ENCODE measurements at regions of chr20 and their contacts with region 1.

Region 1: DNA sequence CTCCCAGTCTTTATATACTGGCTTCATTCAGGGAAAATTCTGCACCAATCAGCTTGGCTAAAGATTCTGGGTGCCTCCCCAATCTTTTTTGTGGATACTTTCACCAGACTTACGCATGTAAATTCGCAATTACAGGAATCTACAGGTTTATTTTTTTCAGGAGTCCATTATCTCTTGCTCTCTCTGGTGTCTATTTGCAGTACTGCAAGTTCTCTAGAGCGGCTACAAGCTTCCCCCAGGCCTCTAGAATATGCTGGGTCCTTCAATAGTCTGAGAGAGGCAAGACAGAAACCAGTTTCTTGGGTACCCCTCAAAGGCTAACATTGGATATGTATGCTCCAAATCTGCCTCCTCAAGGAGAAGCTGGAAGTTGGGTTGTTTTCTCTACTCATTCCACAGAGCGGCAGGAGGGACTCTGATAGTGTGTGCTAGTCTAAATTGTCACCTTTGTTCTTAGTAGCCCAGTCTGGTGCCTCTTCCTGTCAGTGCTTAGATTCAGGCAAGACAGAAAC is 58.5 kb downstream of the SUN5 start:
- DNase-seq: no peak
- H3K4me3 Mint-ChIP-seq: no peak overlapping the region
- H3K27ac Mint-ChIP-seq: peak overlapping the region; percentile 20
- H3K4me1 Mint-ChIP-seq: peaks cover 27% of the 10 kb centered on the region
- H3K27me3 Mint-ChIP-seq: peaks cover 4% of the 10 kb centered on the region

Region 2: DNA sequence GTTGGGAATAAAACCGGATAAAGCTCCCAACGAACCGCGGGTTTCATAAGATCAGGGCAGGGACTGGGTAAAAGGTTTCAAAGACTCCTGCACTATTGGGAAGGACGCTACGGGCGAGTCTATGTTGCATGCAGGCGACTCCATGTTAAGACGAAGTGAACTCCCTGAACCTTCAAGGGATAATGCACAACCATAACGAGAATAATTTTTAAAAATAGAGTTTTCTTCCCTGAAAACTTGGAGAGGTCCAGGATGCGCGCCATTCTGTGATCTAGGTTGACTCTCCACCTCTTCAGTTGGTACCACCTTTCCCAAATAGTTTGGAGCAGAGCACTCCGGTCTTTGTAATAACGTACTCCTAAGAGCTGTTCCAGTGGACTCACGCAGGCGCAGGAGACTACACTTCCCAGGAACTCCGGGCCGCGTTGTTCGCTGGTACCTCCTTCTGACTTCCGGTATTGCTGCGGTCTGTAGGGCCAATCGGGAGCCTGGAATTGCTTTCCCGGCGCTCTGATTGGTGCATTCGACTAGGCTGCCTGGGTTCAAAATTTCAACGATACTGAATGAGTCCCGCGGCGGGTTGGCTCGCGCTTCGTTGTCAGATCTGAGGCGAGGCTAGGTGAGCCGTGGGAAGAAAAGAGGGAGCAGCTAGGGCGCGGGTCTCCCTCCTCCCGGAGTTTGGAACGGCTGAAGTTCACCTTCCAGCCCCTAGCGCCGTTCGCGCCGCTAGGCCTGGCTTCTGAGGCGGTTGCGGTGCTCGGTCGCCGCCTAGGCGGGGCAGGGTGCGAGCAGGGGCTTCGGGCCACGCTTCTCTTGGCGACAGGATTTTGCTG is 1206.8 kb before region 1 on chr20 and contains the start of gene TPX2:
- intact Hi-C with region 1: no loop called
- DNase-seq: peak; percentile 83
- H3K4me3 Mint-ChIP-seq: no peak within 1 kb of the TSS
- H3K27ac Mint-ChIP-seq: no peak within 1 kb of the TSS
- H3K4me1 Mint-ChIP-seq: peaks cover 5% of the 10 kb centered on the region
- H3K27me3 Mint-ChIP-seq: no peaks in the 10 kb centered on the region
- total RNA-seq, gene TPX2: 53.3 and 54.4 TPM in 2 replicates

Region 3: GRCh38 chr20:32966881-32967781 is 21.4 kb after region 1 on chr20:
- intact Hi-C with region 1: loop called (anchors 2 kb)
- DNase-seq: peak; percentile 63
- H3K4me3 Mint-ChIP-seq: peak overlapping the region; percentile 37
- H3K27ac Mint-ChIP-seq: peak overlapping the region; percentile 73
- H3K4me1 Mint-ChIP-seq: peaks cover 57% of the 10 kb centered on the region
- H3K27me3 Mint-ChIP-seq: no peaks in the 10 kb centered on the region

Region 4: DNA sequence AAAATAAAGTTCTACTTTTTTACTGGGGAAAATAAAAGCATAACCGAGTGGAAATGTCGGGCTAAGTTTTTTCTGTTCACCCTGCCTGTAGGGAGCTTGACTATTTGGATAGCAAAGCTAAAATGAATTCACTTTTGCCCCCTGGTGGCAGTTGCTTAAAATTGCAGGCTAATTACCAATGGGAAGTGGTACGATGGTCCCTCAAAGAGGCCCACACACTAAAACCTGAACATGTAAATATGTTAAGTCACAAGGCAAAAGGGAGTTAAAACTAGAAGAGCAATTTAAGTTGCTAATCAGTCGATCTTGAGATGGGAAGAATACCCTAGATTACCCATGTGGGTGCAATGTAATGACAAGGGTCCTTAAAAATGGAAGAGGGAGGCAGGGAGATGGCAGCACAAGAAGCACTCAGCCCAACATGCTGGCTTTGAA is 59.4 kb after region 1 on chr20:
- intact Hi-C with region 1: loop called (anchors 1 kb)
- DNase-seq: peak; percentile 5
- H3K4me3 Mint-ChIP-seq: no peak overlapping the region
- H3K27ac Mint-ChIP-seq: no peak overlapping the region
- H3K4me1 Mint-ChIP-seq: no peaks in the 10 kb centered on the region
- H3K27me3 Mint-ChIP-seq: no peaks in the 10 kb centered on the region

Region 5: DNA sequence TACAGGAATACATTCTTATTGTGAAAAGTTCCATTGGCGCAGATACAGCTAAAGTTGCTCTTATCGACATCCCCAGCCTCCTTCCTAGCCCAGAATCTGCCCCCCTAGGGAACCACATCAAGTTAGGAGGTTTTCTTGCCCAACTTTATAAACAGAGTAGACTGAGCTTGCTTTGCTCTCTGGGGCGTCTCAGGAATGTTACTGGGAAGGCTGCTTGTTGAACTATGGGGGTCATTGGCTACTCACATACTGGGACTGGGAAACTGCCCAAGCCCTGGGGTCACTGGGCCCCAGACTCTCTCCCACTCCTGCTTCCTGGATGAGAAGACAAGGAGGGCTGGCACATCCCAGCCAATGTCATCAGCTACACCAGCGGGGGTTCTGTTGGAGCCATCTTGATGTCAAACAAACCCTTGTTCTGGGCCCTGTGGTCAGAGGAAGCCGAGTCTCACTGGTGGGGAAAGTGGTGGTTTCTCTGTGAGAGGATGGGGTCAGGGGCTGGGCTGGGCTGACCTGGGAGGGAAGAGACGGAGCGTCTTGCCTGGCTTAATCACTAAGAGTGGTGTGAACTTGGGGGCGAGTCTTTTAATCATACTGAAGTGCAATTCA is 159.7 kb after region 1 on chr20:
- intact Hi-C with region 1: no loop called
- DNase-seq: no peak
- H3K4me3 Mint-ChIP-seq: no peak overlapping the region
- H3K27ac Mint-ChIP-seq: no peak overlapping the region
- H3K4me1 Mint-ChIP-seq: no peaks in the 10 kb centered on the region
- H3K27me3 Mint-ChIP-seq: no peaks in the 10 kb centered on the region